IMR-90 (cell line): ENCODE measurements at regions of chr18 and their contacts with region 1.

Region 1: DNA sequence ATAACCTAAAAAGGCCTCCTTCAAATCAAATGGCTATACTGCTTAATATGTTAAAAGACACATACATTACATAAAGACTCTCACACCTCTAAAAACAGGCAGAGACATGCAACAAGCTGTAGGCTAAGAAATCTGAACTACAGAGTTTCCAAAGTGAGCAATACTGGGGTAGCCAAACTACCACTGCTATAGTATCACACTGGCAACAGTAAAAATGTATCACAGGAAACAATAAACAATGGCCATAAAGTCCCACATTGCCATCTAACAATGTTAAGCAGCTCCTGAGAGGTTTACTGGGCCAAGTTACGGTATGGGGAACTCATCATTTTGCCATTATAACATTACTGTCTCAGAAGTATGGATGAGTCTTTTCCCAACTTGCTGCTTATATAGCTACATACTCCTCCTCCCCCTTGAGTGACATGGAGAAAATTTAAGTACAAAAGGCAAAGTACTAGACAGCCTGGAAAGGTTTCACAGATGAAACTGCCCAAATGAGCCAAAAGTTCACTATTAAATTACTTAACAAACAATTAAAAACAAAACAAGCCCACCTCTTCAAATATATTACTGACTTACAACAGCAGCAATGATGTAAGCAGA is 50.3 kb downstream of the SS18 start:
- DNase-seq: no peak
- ATAC-seq: 0 out of 2 replicates have a peak, but pooled peaks have one; percentile 24
- H3K4me3 ChIP-seq: no peak overlapping the region
- H3K27ac ChIP-seq: no peak overlapping the region
- H3K4me1 ChIP-seq: no peaks in the 10 kb centered on the region
- H3K27me3 ChIP-seq: no peaks in the 10 kb centered on the region
- CTCF ChIP-seq: no peak
- POLR2A ChIP-seq: no peak
- RAD21 ChIP-seq: no peak

Region 2: DNA sequence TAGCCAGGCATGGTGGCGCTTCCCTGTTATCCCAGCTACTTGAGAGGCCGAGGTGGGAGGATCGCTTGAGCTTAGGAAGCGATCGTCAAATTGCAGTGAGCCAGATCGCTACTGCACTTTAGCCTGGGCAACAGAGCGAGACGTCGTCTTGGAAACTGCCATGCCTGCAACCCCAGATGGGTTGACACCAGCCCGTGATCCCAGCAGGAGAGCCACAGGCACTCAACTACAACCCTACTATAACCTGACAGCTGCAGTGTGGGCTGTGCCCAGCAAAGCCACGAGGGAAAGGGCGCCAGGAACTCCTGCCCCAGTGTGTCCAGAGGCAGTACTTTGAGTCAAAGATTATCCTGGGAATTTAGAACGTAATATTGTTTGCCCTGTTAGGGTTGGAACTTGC is 35.3 kb before region 1 on chr18:
- CTCF ChIA-PET with region 1: no interaction called
- POLR2A ChIA-PET with region 1: no interaction called
- dilution Hi-C with region 1: no loop called
- in situ Hi-C with region 1: no loop called
- intact Hi-C with region 1: loop called (anchors 5 kb)
- DNase-seq: no peak
- ATAC-seq: no peak
- H3K4me3 ChIP-seq: no peak overlapping the region
- H3K27ac ChIP-seq: no peak overlapping the region
- H3K4me1 ChIP-seq: no peaks in the 10 kb centered on the region
- H3K27me3 ChIP-seq: no peaks in the 10 kb centered on the region
- CTCF ChIP-seq: no peak
- POLR2A ChIP-seq: no peak
- RAD21 ChIP-seq: no peak

Region 3: DNA sequence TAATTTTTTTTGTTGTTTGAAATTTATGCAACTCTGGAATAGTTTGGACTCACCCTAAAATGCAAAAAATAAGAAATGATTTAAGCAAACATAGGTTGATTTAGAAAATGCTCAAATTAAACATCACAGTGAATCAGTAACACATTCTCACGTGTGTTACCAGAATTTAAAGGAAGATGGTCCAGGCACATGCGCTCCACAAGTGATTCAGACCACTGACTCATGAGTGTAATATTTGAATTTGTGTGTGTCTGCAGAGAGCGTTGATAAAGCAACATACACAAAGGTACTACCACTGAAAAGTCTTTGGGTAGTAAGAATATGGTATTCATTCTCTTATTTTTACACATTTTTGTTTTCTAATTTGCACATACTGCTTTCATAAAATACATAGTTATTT is 42.3 kb after region 1 on chr18:
- CTCF ChIA-PET with region 1: no interaction called
- POLR2A ChIA-PET with region 1: no interaction called
- dilution Hi-C with region 1: no loop called
- in situ Hi-C with region 1: no loop called
- intact Hi-C with region 1: loop called (anchors 5 kb)
- DNase-seq: peak; percentile 65
- ATAC-seq: peak; percentile 69
- H3K4me3 ChIP-seq: no peak overlapping the region
- H3K27ac ChIP-seq: no peak overlapping the region
- H3K4me1 ChIP-seq: no peaks in the 10 kb centered on the region
- H3K27me3 ChIP-seq: no peaks in the 10 kb centered on the region
- CTCF ChIP-seq: no peak
- POLR2A ChIP-seq: no peak
- RAD21 ChIP-seq: no peak